Activated T-helper 1 cell treated with anti-CD3 and anti-CD28 coated beads, Interleukin-12 subunit alpha, Interleukin-12 subunit beta, Interleukin-2, Interleukin-4 antibody, amounts not matched to agents 30 ng/mL and 10 ng/mL and 1 ng/mL, durations not matched to agents 14 hours and 24 hours and 36 hours (primary cell): ENCODE measurements at regions of chrX and their contacts with region 1.

Region 1: DNA sequence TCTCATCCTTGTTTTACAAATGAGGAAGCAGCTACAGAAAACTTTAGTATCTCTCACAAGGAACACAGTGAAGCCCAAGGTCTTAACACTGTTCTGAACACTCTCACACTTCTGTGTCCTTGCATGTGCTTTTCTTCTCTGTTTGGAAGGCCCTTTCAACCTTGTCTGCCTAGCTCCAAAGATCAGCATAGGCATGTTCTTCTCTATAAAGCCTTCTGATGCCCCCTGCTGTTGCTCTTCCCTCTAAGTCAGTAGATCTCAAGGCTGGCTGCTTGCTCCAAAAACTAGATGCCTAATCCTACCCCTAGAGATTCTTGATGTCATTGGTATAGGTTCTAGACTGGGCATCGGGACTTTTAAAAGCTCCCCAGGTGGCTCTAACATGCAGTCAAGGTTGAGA is 5.9 kb downstream of the APOO start:
- DNase-seq: peak; percentile 9
- H3K4me3 Mint-ChIP-seq: no peak overlapping the region
- H3K27ac Mint-ChIP-seq: no peak overlapping the region
- H3K4me1 Mint-ChIP-seq: peaks cover 5% of the 10 kb centered on the region
- H3K27me3 Mint-ChIP-seq: no peaks in the 10 kb centered on the region

Region 2: GRCh38 chrX:23616361-23616760 is 285.4 kb before region 1 on chrX:
- intact Hi-C with region 1: no loop called
- DNase-seq: no peak
- H3K4me3 Mint-ChIP-seq: no peak overlapping the region
- H3K27ac Mint-ChIP-seq: no peak overlapping the region
- H3K4me1 Mint-ChIP-seq: no peaks in the 10 kb centered on the region
- H3K27me3 Mint-ChIP-seq: peaks cover 1% of the 10 kb centered on the region

Region 3: DNA sequence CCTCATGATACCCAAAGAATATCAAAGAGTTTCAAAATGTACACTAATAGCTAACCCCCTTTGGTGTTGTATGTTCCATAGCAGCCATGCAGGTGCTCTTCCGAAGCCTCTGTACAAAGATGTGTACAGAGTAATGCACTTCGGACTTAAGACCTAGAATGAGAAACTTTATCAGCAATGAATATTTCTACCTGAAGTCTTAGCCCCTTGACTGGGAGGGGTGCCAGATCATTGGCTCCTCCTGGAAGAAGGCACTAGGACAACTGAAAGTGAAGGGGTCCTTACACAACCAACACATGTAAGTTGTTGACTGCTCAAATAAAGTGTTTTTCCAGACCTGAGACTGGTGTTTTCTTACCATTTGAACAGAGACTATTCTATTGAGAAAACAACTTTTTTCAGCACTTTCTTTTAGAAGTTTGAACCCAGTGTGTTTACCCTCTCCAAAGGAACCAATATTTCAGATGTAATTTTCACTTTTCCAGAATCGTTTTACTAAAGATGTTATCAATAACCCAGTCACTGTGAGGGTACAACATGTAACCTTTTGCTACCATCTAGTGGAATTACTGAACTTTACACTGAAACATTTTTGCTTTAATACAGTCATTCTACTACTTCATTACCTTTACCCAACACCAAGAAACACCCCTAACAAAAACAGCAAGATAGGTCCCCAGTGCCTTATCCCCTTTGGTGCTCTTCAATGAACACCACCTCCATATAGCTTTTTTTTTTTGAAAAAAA is 267.8 kb before region 1 on chrX:
- intact Hi-C with region 1: loop called (anchors 1 kb)
- DNase-seq: no peak
- H3K4me3 Mint-ChIP-seq: no peak overlapping the region
- H3K27ac Mint-ChIP-seq: no peak overlapping the region
- H3K4me1 Mint-ChIP-seq: no peaks in the 10 kb centered on the region
- H3K27me3 Mint-ChIP-seq: peaks cover 7% of the 10 kb centered on the region

Region 4: GRCh38 chrX:23694606-23695005 is 207.2 kb before region 1 on chrX:
- intact Hi-C with region 1: loop called (anchors 1 kb)
- DNase-seq: peak; percentile 4
- H3K4me3 Mint-ChIP-seq: no peak overlapping the region
- H3K27ac Mint-ChIP-seq: no peak overlapping the region
- H3K4me1 Mint-ChIP-seq: no peaks in the 10 kb centered on the region
- H3K27me3 Mint-ChIP-seq: no peaks in the 10 kb centered on the region

Region 5: GRCh38 chrX:23704673-23705206 is 197.1 kb before region 1 on chrX:
- intact Hi-C with region 1: no loop called
- DNase-seq: no peak
- H3K4me3 Mint-ChIP-seq: no peak overlapping the region
- H3K27ac Mint-ChIP-seq: peak overlapping the region; percentile 61
- H3K4me1 Mint-ChIP-seq: no peaks in the 10 kb centered on the region
- H3K27me3 Mint-ChIP-seq: no peaks in the 10 kb centered on the region

Region 6: DNA sequence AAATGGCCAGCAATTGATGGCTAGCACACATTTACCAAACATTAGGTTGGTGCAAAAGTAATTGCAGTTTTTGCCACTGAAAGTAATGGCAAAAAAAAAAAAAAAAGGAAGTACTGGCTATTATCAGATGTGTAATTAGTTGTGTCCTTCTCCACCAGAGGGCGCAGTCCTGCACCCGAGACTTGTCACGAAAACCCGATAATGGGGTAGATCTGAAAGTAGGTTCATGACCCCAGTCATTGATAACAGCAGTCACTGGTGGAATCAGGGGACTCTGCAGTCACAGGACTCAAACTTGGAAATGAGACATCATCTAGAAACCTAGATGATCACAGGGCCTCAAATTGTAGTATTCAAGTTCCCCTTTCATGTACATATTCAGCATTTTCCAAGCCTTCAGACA is 145.6 kb before region 1 on chrX:
- intact Hi-C with region 1: loop called (anchors 1 kb)
- DNase-seq: peak; percentile 44
- H3K4me3 Mint-ChIP-seq: no peak overlapping the region
- H3K27ac Mint-ChIP-seq: no peak overlapping the region
- H3K4me1 Mint-ChIP-seq: peaks cover 5% of the 10 kb centered on the region
- H3K27me3 Mint-ChIP-seq: no peaks in the 10 kb centered on the region

Region 7: DNA sequence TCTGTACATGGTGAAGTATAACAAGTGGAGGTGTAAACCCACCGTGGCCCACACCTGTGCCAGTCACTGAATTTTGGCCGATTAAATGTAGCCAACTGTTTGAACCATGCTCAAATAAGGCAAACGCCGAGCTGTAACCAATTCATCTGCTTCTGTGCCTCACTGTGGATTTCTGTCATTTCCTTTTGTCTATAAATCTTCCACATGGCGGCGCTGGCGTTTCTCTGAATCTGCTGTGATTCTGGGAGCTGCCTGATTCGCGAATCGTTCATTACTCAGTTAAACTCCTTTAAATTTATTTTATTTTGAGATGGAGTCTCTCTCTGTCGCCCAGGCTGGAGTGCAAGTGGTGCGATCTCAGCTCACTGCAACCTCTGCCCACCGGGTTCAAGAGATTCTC is 392.8 kb after region 1 on chrX:
- intact Hi-C with region 1: no loop called
- DNase-seq: peak; percentile 2
- H3K4me3 Mint-ChIP-seq: no peak overlapping the region
- H3K27ac Mint-ChIP-seq: no peak overlapping the region
- H3K4me1 Mint-ChIP-seq: no peaks in the 10 kb centered on the region
- H3K27me3 Mint-ChIP-seq: no peaks in the 10 kb centered on the region